Endothelial cell of umbilical vein (primary cell): ENCODE measurements at regions of chr1 and their contacts with region 1.

Region 1: GRCh38 chr1:232950197-232951176 is at the start of gene NTPCR:
- DNase-seq: peak; percentile 96
- H3K4me3 ChIP-seq: peak within 1 kb of the TSS; percentile 48 to 85 (median 64)
- H3K27ac ChIP-seq: peak within 1 kb of the TSS; percentile 69
- H3K4me1 ChIP-seq: peaks cover 10% of the 10 kb centered on the region
- H3K27me3 ChIP-seq: no peaks in the 10 kb centered on the region
- CTCF ChIP-seq: peak in 1 of 2 donors; percentile 14
- POLR2A ChIP-seq: peak; percentile 85
- total RNA-seq, gene NTPCR: 30.3 and 35.3 TPM in 2 replicates

Region 2: DNA sequence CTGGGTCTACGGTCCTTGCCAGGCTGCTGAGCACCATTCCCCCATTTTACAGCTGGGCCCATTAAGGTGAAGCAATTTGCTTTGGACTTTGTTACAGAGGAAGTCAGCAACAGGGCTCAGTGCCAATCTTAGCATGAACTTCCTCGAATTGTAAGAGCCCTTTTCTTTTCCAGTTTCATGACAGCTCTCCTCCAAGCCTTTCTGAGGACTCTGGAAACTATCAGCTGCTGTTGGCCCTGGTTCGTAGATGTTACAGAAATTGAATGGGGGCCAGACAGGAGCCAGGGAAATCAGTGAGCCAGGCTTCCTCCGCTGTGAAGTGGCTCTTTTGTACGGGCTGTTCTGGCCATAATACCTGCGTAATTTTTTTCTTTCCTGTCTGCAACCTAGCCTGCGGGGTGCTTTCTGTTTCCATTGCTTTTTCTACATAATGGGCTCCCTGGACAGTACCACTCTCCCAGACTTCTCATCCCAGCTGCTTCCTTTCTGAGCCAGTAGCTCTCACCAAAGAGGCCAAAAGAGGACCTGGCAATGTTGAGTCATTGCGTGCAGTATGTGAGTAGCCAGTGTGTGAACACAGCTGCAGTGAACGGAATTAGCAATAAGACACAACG is 937.6 kb before region 1 on chr1:
- CTCF ChIA-PET with region 1: no interaction called
- POLR2A ChIA-PET with region 1: no interaction called
- dilution Hi-C with region 1: no loop called
- intact Hi-C with region 1: loop called (anchors 5 kb)
- DNase-seq: peak; percentile 97
- H3K4me3 ChIP-seq: peak overlapping the region in 1 of 3 experiments; percentile 14
- H3K27ac ChIP-seq: peak overlapping the region; percentile 80
- H3K4me1 ChIP-seq: peaks cover 27% of the 10 kb centered on the region
- H3K27me3 ChIP-seq: no peaks in the 10 kb centered on the region
- CTCF ChIP-seq: no peak
- POLR2A ChIP-seq: no peak

Region 3: DNA sequence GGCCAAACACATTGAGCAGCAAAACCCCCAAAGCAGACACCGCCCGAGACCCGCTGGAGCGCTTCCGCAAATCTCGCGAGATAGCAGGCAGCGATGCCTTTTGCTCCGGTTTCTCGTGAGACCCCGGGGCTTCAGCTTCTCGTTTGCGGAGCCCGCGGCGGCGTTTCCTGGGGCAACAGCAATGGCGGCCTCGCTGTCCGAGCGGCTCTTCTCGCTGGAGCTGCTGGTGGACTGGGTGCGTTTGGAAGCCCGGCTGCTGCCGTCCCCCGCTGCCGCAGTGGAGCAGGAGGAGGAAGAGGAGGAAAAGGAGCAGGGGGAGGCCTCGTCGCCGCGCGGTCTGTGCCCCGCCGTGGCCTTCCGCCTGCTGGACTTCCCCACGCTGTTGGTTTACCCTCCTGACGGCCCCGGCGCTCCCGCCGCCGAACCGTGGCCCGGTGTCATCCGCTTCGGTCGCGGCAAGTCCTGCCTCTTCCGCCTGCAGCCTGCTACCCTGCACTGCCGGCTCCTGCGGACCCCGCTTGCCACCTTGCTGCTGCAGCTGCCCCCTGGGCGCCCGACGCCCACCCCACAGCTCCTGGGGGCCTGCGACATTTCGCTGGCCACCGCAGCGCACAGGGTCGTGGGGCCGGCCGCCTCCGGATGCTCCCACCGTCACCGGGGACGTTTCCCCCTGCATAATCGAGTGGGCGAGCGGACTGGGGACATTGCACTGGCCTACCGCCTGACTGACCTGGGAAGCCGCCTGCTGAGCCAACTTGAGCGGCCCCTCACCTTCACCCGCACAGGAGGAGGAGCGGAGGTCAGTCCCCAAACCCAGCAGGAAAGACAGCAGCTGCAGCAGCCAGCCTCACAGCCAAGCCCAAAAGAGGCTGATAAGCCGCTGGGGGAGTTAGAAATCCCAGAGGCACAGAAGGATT is 145.0 kb before region 1 on chr1 and contains the start of gene MAP10:
- CTCF ChIA-PET with region 1: no interaction called
- POLR2A ChIA-PET with region 1: no interaction called
- dilution Hi-C with region 1: no loop called
- intact Hi-C with region 1: loop called (anchors 5 kb)
- DNase-seq: peak; percentile 77
- H3K4me3 ChIP-seq: peak within 1 kb of the TSS; percentile 62 to 80 (median 72)
- H3K27ac ChIP-seq: peak within 1 kb of the TSS; percentile 32
- H3K4me1 ChIP-seq: peaks cover 6% of the 10 kb centered on the region
- H3K27me3 ChIP-seq: no peaks in the 10 kb centered on the region
- CTCF ChIP-seq: no peak
- POLR2A ChIP-seq: peak; percentile 51
- total RNA-seq, gene MAP10: 1.9 and 2.0 TPM in 2 replicates

Region 4: DNA sequence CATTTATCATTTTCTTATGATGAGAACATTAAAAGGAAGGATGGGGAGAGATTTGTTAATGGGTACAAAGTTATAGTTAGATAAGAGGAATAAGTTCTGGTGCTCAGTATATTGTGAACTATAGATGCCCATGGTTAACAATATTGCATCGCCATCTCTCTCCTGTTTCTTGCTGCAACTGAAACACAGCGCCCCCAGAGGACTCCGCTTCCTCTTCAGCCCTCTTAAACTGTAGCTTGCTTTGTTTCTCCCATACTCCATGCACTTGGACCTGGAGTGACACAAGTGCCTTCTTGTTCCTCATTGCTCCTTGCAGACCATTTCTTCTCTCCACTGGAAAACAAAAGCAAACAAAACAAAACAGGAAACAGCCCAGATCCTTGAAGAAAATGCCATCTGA is 70.1 kb before region 1 on chr1:
- CTCF ChIA-PET with region 1: no interaction called
- POLR2A ChIA-PET with region 1: no interaction called
- dilution Hi-C with region 1: no loop called
- intact Hi-C with region 1: no loop called
- DNase-seq: peak; percentile 26
- H3K4me3 ChIP-seq: no peak overlapping the region
- H3K27ac ChIP-seq: no peak overlapping the region
- H3K4me1 ChIP-seq: no peaks in the 10 kb centered on the region
- H3K27me3 ChIP-seq: no peaks in the 10 kb centered on the region
- CTCF ChIP-seq: peak; percentile 36 to 62
- POLR2A ChIP-seq: no peak

Region 5: DNA sequence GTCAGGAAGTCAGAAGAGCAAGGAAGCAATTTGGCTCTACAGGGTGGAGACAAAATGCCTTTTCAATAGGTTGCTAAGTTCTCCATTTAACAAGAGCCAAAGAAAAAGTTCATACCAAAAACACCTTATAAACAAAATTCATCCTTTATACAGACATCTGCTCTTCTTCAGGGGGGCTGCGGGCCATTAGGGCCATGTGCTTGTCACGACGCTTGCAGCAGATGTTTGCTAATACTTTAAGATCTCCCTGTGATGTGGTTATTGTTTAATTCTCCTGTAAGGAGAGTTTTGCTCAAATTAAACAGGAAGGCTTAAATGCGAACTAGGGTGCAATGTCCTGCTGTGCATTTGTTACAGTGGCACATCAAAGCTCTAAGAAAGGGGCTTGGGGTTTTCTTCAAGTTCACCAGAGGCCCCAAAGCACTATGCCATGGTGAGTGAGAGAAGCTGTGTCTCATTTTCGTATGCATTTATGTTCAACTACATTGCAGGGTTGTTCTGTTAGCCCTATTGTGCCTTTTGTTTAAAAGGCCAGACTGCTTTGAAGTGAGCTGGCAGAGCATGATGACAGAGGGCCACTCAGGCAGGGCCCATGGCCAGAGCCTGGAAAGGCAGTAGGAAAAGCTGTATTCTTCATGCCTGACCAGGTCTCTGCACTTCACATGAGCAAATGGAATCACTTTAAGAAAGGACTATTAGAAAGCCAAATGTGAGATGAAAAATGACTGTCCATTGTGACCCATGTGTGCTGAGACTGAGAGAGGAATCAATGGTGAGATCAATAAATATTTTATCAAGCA is 24.9 kb before region 1 on chr1:
- CTCF ChIA-PET with region 1: no interaction called
- POLR2A ChIA-PET with region 1: no interaction called
- dilution Hi-C with region 1: no loop called
- intact Hi-C with region 1: no loop called
- DNase-seq: no peak
- H3K4me3 ChIP-seq: no peak overlapping the region
- H3K27ac ChIP-seq: no peak overlapping the region
- H3K4me1 ChIP-seq: no peaks in the 10 kb centered on the region
- H3K27me3 ChIP-seq: no peaks in the 10 kb centered on the region
- CTCF ChIP-seq: no peak
- POLR2A ChIP-seq: no peak

Region 6: GRCh38 chr1:232999956-233000625 is 49.6 kb after region 1 on chr1:
- CTCF ChIA-PET with region 1: no interaction called
- POLR2A ChIA-PET with region 1: no interaction called
- dilution Hi-C with region 1: no loop called
- intact Hi-C with region 1: no loop called
- DNase-seq: no peak
- H3K4me3 ChIP-seq: no peak overlapping the region
- H3K27ac ChIP-seq: no peak overlapping the region
- H3K4me1 ChIP-seq: no peaks in the 10 kb centered on the region
- H3K27me3 ChIP-seq: no peaks in the 10 kb centered on the region
- CTCF ChIP-seq: no peak
- POLR2A ChIP-seq: no peak

Region 7: DNA sequence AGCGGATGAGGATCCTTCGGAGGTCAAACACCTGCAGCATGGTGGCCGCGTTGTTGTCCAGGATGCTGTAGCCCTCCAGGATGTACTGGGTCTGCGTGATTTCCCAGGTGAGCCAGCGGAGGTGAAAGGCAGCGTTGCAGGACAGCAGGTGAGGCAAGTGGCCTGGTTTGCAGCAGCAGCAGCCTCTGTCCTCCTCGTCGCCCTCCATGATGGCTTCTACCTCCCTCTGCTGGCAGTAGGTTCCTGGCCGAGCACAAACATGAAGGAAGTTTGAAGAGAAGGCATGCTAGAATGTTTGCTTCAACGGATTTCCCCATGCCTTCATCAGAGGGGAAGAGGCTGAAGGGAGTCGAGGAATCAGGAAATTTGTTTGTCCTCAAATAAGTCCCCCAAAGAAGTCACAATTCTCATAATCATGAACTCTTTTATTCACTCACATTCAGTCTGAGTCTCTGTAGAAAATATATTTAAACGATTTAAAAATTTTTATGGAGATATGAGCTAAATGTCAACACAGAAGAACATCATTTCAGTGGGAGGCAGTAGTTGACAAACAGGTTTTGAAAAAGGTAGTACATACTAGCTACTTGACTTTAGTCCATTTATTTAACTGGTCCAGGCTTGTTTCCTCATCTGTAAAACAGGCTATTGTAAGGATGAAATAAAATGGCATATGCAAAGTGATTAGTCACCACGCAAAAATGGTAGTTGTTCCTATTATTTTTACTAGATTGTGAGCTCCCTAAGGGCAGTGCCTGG is 74.8 kb after region 1 on chr1:
- CTCF ChIA-PET with region 1: no interaction called
- POLR2A ChIA-PET with region 1: no interaction called
- dilution Hi-C with region 1: no loop called
- intact Hi-C with region 1: loop called (anchors 2 kb)
- DNase-seq: peak; percentile 68
- H3K4me3 ChIP-seq: no peak overlapping the region
- H3K27ac ChIP-seq: no peak overlapping the region
- H3K4me1 ChIP-seq: peaks cover 6% of the 10 kb centered on the region
- H3K27me3 ChIP-seq: no peaks in the 10 kb centered on the region
- CTCF ChIP-seq: peak; percentile 31 to 69
- POLR2A ChIP-seq: no peak

Region 8: DNA sequence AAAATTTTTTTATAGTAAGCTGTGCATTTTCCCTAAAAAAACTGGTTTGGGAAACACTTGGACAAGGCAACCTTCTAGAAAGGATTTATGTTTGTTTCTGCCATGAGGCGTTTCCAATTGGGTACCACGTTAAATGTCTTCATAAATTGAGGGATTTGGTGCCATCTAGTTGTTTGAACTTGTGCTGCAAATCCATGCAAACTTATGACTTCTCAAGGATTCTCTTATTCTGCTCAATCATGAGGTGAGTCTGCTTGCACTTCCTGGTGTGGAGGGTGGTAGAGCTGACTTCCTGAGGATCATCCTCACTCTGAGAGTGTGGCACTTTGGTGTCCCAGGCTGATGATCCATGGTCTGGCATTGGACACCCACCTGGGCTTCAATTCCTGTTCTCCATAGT is 221.7 kb after region 1 on chr1:
- CTCF ChIA-PET with region 1: no interaction called
- POLR2A ChIA-PET with region 1: interaction called, 7 read pairs
- dilution Hi-C with region 1: no loop called
- intact Hi-C with region 1: loop called (anchors 5 kb)
- DNase-seq: peak; percentile 67
- H3K4me3 ChIP-seq: no peak overlapping the region
- H3K27ac ChIP-seq: no peak overlapping the region
- H3K4me1 ChIP-seq: no peaks in the 10 kb centered on the region
- H3K27me3 ChIP-seq: no peaks in the 10 kb centered on the region
- CTCF ChIP-seq: peak; percentile 26 to 42
- POLR2A ChIP-seq: no peak